CD14-positive monocyte (primary cell): ENCODE measurements at regions of chr7 and their contacts with region 1.

Region 1: GRCh38 chr7:125279961-125280360 is 350.3 kb upstream of the POT1 start:
- DNase-seq: no peak
- H3K4me3 ChIP-seq: no peak overlapping the region
- H3K4me3 Mint-ChIP-seq: no peak overlapping the region
- H3K27ac ChIP-seq: no peak overlapping the region
- H3K27ac Mint-ChIP-seq: no peak overlapping the region
- H3K4me1 ChIP-seq: no peaks in the 10 kb centered on the region
- H3K4me1 Mint-ChIP-seq: no peaks in the 10 kb centered on the region
- H3K27me3 ChIP-seq: no peaks in the 10 kb centered on the region
- H3K27me3 Mint-ChIP-seq: no peaks in the 10 kb centered on the region
- CTCF ChIP-seq: no peak

Region 2: DNA sequence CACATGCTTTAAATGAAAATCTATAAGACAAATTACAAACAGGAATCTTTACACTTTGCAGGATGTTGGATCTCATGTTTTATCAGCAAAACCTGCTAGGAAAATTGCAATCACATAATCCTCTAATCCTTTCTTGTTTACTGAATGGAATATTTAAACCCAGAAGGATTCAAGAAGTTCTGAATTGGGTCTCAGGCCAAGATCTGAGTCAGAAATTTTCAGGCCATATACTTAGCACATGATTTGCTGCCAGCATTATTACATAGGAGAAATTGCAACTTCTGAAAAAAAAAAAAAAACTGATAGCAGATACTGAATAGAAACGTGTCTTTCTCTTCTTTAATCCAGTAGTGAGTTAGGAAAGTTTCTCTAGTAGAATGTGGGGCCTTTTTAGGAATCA is 655.0 kb after region 1 on chr7:
- intact Hi-C with region 1: loop called in 1 of 2 experiments (anchors 10 kb)
- DNase-seq: no peak
- H3K4me3 ChIP-seq: no peak overlapping the region
- H3K4me3 Mint-ChIP-seq: no peak overlapping the region
- H3K27ac ChIP-seq: no peak overlapping the region
- H3K27ac Mint-ChIP-seq: no peak overlapping the region
- H3K4me1 ChIP-seq: no peaks in the 10 kb centered on the region
- H3K4me1 Mint-ChIP-seq: no peaks in the 10 kb centered on the region
- H3K27me3 ChIP-seq: no peaks in the 10 kb centered on the region
- H3K27me3 Mint-ChIP-seq: no peaks in the 10 kb centered on the region
- CTCF ChIP-seq: no peak